Naive thymus-derived CD4-positive, alpha-beta T cell (primary cell): ENCODE measurements at regions of chr15 and their contacts with region 1.

Region 1: GRCh38 chr15:41079717-41080116 is 36.4 kb downstream of the INO80 start:
- DNase-seq: no peak
- ATAC-seq: no peak
- H3K4me3 ChIP-seq: no peak overlapping the region
- H3K4me3 Mint-ChIP-seq: no peak overlapping the region
- H3K27ac ChIP-seq: no peak overlapping the region
- H3K27ac Mint-ChIP-seq: peak overlapping the region in 2 of 9 donors; percentile 6 to 54
- H3K4me1 ChIP-seq: no peaks in the 10 kb centered on the region
- H3K4me1 Mint-ChIP-seq: peaks cover 0 to 1% (median 0%) of the 10 kb centered on the region in 7 donors
- H3K27me3 ChIP-seq: no peaks in the 10 kb centered on the region
- H3K27me3 Mint-ChIP-seq: no peaks in the 10 kb centered on the region

Region 2: GRCh38 chr15:40163657-40164416 is 915.9 kb before region 1 on chr15:
- CTCF ChIA-PET with region 1: no interaction called
- POLR2A ChIA-PET with region 1: no interaction called
- intact Hi-C with region 1: no loop called
- DNase-seq: no peak
- ATAC-seq: no peak
- H3K4me3 ChIP-seq: no peak overlapping the region
- H3K4me3 Mint-ChIP-seq: peak overlapping the region in 1 of 10 donors; percentile 61
- H3K27ac ChIP-seq: no peak overlapping the region
- H3K27ac Mint-ChIP-seq: peak overlapping the region in 1 of 9 donors; percentile 75
- H3K4me1 ChIP-seq: peaks cover 0 to 7% of the 10 kb centered on the region in 2 donors
- H3K4me1 Mint-ChIP-seq: peaks cover 0 to 28% (median 0%) of the 10 kb centered on the region in 7 donors
- H3K27me3 ChIP-seq: no peaks in the 10 kb centered on the region
- H3K27me3 Mint-ChIP-seq: no peaks in the 10 kb centered on the region

Region 3: GRCh38 chr15:41655716-41656115 is 576.0 kb after region 1 on chr15:
- CTCF ChIA-PET with region 1: no interaction called
- POLR2A ChIA-PET with region 1: no interaction called
- intact Hi-C with region 1: no loop called
- DNase-seq: no peak
- ATAC-seq: no peak
- H3K4me3 ChIP-seq: no peak overlapping the region
- H3K4me3 Mint-ChIP-seq: no peak overlapping the region
- H3K27ac ChIP-seq: no peak overlapping the region
- H3K27ac Mint-ChIP-seq: no peak overlapping the region
- H3K4me1 ChIP-seq: peaks cover 5 to 9% of the 10 kb centered on the region in 2 donors
- H3K4me1 Mint-ChIP-seq: peaks cover 2 to 24% (median 14%) of the 10 kb centered on the region in 7 donors
- H3K27me3 ChIP-seq: no peaks in the 10 kb centered on the region
- H3K27me3 Mint-ChIP-seq: peaks cover 0 to 56% (median 0%) of the 10 kb centered on the region in 5 donors

Region 4: GRCh38 chr15:41727143-41727542 is 647.4 kb after region 1 on chr15:
- CTCF ChIA-PET with region 1: no interaction called
- POLR2A ChIA-PET with region 1: interaction called, 10 read pairs
- intact Hi-C with region 1: no loop called
- DNase-seq: no peak
- ATAC-seq: no peak
- H3K4me3 ChIP-seq: no peak overlapping the region
- H3K4me3 Mint-ChIP-seq: no peak overlapping the region
- H3K27ac ChIP-seq: no peak overlapping the region
- H3K27ac Mint-ChIP-seq: no peak overlapping the region
- H3K4me1 ChIP-seq: no peaks in the 10 kb centered on the region
- H3K4me1 Mint-ChIP-seq: peaks cover 0 to 24% (median 7%) of the 10 kb centered on the region in 7 donors
- H3K27me3 ChIP-seq: no peaks in the 10 kb centered on the region
- H3K27me3 Mint-ChIP-seq: no peaks in the 10 kb centered on the region